ENCODE measurements at regions of chr11 and their contacts with region 1.

Region 1: DNA sequence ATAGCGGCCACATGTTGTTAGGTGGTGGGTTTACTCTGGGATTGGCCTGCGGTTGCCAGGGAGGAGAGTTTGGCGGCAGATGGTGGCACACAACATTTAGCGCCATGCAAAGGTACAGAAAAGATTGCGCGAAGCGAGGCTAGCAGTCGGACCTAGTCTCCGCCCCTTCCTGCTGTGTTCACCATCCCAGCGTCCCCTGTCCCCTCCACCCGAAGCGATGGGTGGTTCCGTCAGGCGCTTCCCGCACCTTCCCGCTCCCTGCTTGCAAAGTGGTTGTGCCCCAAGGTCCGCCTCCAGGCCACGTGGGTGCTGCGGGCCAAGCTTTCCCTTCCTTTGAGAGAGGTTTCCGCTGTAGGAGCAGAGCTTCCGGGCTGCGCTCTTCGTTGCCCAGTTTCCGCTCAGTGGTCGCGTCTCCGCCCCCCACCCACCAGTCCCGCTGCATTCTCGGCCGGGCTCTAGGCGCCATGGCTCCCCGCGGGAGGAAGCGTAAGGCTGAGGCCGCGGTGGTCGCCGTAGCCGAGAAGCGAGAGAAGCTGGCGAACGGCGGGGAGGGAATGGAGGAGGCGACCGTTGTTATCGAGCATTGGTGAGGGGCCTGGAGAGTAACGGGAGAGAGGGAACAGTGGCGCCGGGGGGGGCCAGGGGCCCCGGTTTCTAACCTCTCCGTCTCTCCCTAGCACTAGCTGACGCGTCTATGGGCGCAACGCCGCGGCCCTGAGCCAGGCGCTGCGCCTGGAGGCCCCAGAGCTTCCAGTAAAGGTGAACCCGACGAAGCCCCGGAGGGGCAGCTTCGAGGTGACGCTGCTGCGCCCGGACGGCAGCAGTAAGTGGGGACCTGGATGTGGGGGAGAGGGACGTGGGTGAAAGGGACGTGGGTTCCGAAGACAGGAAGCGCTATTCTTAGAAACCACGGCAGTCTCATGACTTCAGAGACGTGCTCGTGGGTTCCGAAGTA is at the start of gene SELENOH:
- DNase-seq: peak; percentile 98
- ATAC-seq: peak; percentile 94
- H3K4me3 Mint-ChIP-seq: peak within 1 kb of the TSS; percentile 98
- H3K27ac Mint-ChIP-seq: peak within 1 kb of the TSS; percentile 100
- H3K4me1 Mint-ChIP-seq: peaks cover 28% of the 10 kb centered on the region
- H3K27me3 Mint-ChIP-seq: no peaks in the 10 kb centered on the region
- total RNA-seq, gene SELENOH: 117 to 244 TPM

Region 2: DNA sequence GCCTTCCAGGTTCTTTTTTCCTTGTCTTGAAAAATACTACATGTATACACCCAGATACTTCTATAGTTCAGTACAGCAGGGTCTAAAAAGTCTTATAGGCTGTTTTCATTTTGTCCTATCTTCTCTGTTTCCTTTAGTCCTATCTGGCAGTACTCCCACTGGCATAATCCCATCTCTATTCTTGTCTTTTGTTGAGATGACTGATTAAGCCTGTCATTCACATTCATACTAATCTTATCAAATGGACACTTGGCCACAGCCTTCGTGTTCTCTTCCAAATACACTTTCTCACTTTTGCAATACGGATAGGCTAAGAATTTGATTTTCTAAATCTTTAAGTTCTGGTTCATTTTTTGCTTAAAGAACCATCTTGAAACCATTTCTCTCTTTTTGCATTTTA is 709.9 kb before region 1 on chr11:
- CTCF ChIA-PET with region 1: no interaction called
- POLR2A ChIA-PET with region 1: no interaction called
- intact Hi-C with region 1: no loop called
- DNase-seq: no peak
- ATAC-seq: no peak
- H3K4me3 Mint-ChIP-seq: no peak overlapping the region
- H3K27ac Mint-ChIP-seq: no peak overlapping the region
- H3K4me1 Mint-ChIP-seq: no peaks in the 10 kb centered on the region
- H3K27me3 Mint-ChIP-seq: no peaks in the 10 kb centered on the region

Region 3: GRCh38 chr11:57335343-57336110 is 405.9 kb before region 1 on chr11 and contains the start of gene SSRP1:
- CTCF ChIA-PET with region 1: no interaction called
- POLR2A ChIA-PET with region 1: no interaction called
- intact Hi-C with region 1: loop called (anchors 1 to 5 kb)
- DNase-seq: peak; percentile 93
- ATAC-seq: peak; percentile 99
- H3K4me3 Mint-ChIP-seq: peak within 1 kb of the TSS; percentile 97
- H3K27ac Mint-ChIP-seq: peak within 1 kb of the TSS; percentile 100
- H3K4me1 Mint-ChIP-seq: peaks cover 43% of the 10 kb centered on the region
- H3K27me3 Mint-ChIP-seq: no peaks in the 10 kb centered on the region
- total RNA-seq, gene SSRP1: 279 to 296 TPM

Region 4: DNA sequence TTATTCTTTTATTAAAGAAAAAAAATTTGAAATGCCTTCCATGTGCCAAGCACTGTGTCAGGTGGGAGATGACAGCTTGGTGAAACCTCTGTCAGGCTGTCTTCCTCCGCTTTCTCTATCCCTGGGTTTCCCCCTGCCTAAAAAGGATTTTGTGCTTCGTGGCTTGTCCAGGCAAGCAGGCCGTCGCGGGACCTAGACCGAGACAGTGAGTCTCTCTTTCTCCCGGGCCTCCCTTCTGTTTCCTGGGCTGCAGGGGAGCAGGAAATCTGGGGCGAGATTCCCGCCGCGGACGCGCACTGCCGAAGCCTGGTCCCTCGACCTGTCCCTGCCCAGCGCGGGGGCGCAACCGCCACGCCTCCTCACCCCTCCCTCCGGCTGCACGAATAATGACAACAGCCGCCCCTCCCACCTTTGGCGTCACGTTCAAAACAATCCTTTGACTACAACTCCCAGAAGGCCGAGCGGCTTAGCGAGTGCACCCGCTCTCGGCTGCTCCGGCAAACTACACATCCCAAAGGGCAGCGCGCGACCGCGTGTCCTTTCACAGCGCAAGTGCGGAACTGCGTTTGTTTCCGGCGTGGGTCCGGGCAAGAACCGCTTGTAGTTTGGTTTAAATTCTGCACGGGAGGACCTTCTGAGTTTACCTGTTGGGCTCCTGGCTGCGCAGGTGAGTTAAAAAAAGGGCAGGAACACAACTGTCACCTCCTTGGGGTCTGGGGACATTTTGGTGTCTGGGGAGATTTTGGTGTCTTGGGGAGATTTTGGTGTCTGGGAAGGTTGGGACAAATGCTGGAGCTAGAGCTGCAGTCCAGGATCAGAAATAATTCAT is 84.0 kb before region 1 on chr11 and contains the start of gene CLP1:
- CTCF ChIA-PET with region 1: interaction called, 5 read pairs
- POLR2A ChIA-PET with region 1: no interaction called
- intact Hi-C with region 1: loop called (anchors 1 kb)
- DNase-seq: peak; percentile 100
- ATAC-seq: peak; percentile 98
- H3K4me3 Mint-ChIP-seq: peak within 1 kb of the TSS; percentile 83
- H3K27ac Mint-ChIP-seq: peak within 1 kb of the TSS; percentile 95
- H3K4me1 Mint-ChIP-seq: peaks cover 29% of the 10 kb centered on the region
- H3K27me3 Mint-ChIP-seq: no peaks in the 10 kb centered on the region
- total RNA-seq, gene CLP1: 11.9 to 15.9 TPM

Region 5: GRCh38 chr11:57712256-57713150 is 28.9 kb before region 1 on chr11 and contains the start of gene TMX2:
- CTCF ChIA-PET with region 1: interaction called, 3 read pairs
- POLR2A ChIA-PET with region 1: interaction called, 16 read pairs
- intact Hi-C with region 1: loop called (anchors 1 kb)
- DNase-seq: peak; percentile 94
- ATAC-seq: peak; percentile 93
- H3K4me3 Mint-ChIP-seq: peak within 1 kb of the TSS; percentile 97
- H3K27ac Mint-ChIP-seq: peak within 1 kb of the TSS; percentile 97
- H3K4me1 Mint-ChIP-seq: peaks cover 50% of the 10 kb centered on the region
- H3K27me3 Mint-ChIP-seq: no peaks in the 10 kb centered on the region
- total RNA-seq, gene TMX2: 59.8 to 72.5 TPM

Region 6: DNA sequence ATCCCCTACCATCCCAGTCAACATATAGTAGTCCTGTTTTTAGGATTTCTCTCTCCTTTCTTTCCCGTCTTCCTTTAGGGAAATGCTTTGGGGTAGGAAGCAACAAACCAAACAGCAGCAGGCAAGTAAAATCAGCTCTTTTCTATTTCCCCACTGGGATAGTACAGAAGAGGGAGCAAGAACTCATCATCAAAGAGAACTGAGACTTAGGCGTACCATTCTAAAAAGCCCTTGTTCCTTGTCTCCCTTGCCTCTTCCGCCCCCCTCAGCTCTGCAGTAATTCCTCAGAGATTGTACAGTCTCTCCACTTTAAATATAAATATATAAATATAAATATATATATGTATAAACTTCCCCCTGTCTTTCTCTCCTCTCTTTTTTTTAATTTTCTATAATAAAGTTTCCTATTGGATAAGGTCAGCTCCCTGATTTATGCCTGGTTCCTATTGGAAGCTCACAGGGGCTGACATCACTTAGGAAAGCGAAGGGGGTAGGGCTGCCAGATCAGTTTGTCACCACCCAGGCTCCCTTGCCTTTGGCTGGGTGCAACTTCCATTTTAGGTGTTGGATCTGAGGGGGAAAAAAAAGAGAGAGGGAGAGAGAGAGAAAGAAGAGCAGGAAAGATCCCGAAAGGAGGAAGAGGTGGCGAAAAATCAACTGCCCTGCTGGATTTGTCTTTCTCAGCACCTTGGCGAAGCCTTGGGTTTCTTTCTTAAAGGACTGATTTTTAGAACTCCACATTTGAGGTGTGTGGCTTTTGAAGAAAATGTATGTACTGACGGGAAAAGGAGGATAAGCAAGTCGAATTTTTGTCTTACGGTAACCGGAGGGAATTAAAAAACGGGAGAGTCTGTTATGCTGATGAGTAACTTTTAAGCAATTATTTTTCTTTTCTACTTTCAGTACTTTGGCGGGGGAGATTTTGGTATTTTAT is 20.2 kb after region 1 on chr11 and contains the start of gene CTNND1:
- CTCF ChIA-PET with region 1: interaction called, 6 read pairs
- POLR2A ChIA-PET with region 1: no interaction called
- intact Hi-C with region 1: loop called in 1 of 2 experiments (anchors 1 kb)
- DNase-seq: peak; percentile 30
- ATAC-seq: peak; percentile 59
- H3K4me3 Mint-ChIP-seq: peak within 1 kb of the TSS; percentile 69
- H3K27ac Mint-ChIP-seq: peak within 1 kb of the TSS; percentile 32
- H3K4me1 Mint-ChIP-seq: peaks cover 37% of the 10 kb centered on the region
- H3K27me3 Mint-ChIP-seq: no peaks in the 10 kb centered on the region
- total RNA-seq, gene CTNND1: 6.7 to 7.4 TPM

Region 7: DNA sequence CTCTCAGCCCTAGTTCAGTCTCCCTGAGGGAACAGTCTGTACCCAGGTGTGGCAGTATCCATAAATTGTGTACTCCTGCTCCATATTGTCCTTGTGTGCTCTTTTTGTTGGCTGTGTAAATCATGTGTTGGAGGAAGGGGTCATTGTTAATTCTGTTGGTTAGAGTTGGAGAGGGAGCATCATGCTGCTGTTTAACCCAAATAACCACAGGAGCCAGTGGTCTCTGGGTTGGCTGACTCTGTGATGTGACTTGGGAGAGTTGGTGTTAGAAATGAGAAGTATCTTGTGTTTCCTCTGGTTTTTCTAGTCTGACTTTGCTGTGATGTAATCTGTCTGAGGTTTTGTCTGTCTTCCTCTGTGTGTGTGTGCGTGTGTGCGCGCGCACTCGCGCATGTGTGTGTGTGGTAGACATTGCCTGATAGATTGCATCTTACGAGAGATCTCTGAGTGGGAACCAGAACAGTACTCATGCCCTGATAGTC is 50.7 kb after region 1 on chr11:
- CTCF ChIA-PET with region 1: no interaction called
- POLR2A ChIA-PET with region 1: no interaction called
- intact Hi-C with region 1: loop called (anchors 1 to 2 kb)
- DNase-seq: peak; percentile 89
- ATAC-seq: peak; percentile 96
- H3K4me3 Mint-ChIP-seq: peak overlapping the region; percentile 34
- H3K27ac Mint-ChIP-seq: peak overlapping the region; percentile 89
- H3K4me1 Mint-ChIP-seq: peaks cover 33% of the 10 kb centered on the region
- H3K27me3 Mint-ChIP-seq: no peaks in the 10 kb centered on the region

Region 8: GRCh38 chr11:57834852-57835251 is 93.4 kb after region 1 on chr11:
- CTCF ChIA-PET with region 1: interaction called, 4 read pairs
- POLR2A ChIA-PET with region 1: interaction called, 13 read pairs
- intact Hi-C with region 1: no loop called
- DNase-seq: no peak
- ATAC-seq: no peak
- H3K4me3 Mint-ChIP-seq: no peak overlapping the region
- H3K27ac Mint-ChIP-seq: no peak overlapping the region
- H3K4me1 Mint-ChIP-seq: no peaks in the 10 kb centered on the region
- H3K27me3 Mint-ChIP-seq: peaks cover 29% of the 10 kb centered on the region

Region 9: DNA sequence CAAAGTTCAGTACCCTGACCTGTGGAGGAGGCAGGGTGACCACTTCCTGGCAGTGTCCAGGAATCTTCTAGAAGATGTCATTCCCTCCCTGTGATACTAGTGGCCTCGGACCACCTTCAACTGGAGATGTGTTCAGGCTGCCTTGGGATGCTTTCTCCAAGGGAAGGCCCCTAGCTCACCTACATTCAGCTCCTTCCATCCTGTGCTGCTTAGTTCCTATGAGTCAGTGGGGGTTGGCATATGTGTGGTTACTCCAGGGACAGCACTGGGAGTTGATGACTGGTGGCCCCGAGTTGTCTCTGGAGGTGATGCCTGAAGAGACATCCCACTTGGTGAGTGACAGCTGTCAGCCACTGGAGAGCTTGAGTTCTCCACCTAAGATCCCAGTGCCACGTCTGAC is 200.5 kb after region 1 on chr11:
- CTCF ChIA-PET with region 1: no interaction called
- POLR2A ChIA-PET with region 1: no interaction called
- intact Hi-C with region 1: no loop called
- DNase-seq: no peak
- ATAC-seq: no peak
- H3K4me3 Mint-ChIP-seq: no peak overlapping the region
- H3K27ac Mint-ChIP-seq: no peak overlapping the region
- H3K4me1 Mint-ChIP-seq: no peaks in the 10 kb centered on the region
- H3K27me3 Mint-ChIP-seq: peaks cover 9% of the 10 kb centered on the region

Region 10: GRCh38 chr11:58465690-58466089 is 724.3 kb after region 1 on chr11:
- CTCF ChIA-PET with region 1: no interaction called
- POLR2A ChIA-PET with region 1: no interaction called
- intact Hi-C with region 1: no loop called
- DNase-seq: no peak
- ATAC-seq: no peak
- H3K4me3 Mint-ChIP-seq: no peak overlapping the region
- H3K27ac Mint-ChIP-seq: no peak overlapping the region
- H3K4me1 Mint-ChIP-seq: no peaks in the 10 kb centered on the region
- H3K27me3 Mint-ChIP-seq: no peaks in the 10 kb centered on the region

Measured in activated CD4-positive, alpha-beta T cell treated with anti-CD3 and anti-CD28 coated beads for 36 hours (primary cell).